ENCODE measurements at regions of chr15 and their contacts with region 1.

Region 1: DNA sequence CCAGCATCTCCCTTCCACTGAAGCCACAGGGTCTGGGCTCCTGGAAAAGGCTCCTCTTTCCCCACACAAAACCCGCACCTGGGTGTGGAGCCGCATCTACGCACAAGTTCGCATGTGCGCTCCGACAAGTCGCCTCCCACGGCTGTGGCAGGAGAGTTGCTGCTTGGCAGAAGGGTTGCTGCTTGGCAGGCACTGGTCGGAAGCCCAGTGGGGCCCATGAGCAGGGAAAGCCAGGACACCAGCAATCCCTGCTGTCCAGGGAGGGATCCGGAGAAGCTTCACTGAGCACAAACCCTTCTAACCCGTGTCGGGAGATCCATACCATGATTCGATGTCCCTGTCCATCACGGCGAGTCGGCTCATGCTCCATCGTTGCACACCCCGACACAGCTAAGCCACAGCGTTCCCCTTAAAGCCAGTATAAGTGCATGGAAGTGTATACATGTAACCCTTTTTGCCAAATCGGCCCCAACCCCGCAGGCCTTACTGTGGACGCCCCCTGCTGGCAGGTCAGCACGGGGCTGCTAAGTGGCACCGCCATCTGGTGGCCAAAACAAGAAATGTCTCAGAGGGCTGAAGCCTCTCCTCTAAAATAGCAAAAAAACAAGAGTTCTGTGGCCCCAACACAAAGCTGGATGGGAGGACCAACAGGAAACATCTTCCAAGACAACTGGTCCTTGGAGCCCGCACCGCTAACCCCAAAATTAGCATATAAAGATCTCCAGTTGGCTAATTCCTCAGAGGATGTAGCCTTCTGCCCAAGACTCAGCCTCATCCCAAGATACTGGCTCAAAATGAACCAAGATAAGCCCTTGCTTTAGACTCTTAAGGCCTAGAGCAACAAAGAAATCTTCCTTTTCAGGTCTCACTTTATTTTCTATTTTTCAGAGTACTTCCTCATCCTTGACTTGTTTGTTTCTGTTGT is 8.3 kb downstream of the ANKRD63 start:
- DNase-seq: peak; percentile 91

Region 2: GRCh38 chr15:40217159-40217824 is 57.3 kb before region 1 on chr15:
- intact Hi-C with region 1: loop called (anchors 2 kb)
- DNase-seq: no peak

Region 3: GRCh38 chr15:40310001-40310959 is 35.7 kb after region 1 on chr15:
- intact Hi-C with region 1: loop called (anchors 1 kb)
- DNase-seq: peak; percentile 89

Measured in cardiac septum (tissue), 1 donor.